ENCODE measurements at regions of chr5 and their contacts with region 1.

Region 1: DNA sequence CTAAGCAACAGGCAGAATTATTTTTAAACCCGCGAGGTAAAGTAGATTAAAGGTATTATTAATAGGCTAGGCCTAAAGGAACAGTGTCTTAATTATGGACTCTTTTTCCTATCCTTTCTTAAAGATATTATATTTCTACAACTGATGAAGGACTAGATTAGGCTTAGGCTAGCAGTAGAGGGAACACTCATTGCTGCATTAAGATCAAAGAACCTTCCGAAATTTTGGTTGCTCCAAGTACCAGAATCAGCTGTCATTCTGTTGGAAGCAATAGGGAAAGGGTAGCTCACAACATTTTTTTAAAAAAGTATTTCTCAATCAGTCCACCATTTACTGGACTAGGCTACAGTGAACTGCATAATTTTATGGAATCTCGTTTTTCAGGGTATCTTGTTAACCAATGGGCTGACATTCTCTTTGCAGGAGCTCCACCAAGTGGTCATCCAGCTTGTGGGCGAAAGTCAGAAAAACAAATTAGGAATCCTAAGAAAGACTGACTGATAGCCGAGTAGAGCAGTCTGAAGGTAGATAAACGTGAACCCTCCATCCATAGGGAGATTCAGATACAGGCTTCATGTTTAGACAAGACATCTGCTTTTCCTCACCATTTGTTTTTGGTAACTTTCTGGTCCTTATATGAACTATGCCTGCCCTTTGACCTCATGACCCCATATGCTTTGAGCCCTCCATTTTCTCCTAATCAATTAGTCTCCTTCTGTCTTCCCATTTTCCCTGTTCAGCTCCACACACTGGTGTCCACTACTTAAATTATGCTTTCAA is 103.6 kb upstream of the CHD1 start:
- DNase-seq: peak; percentile 82

Region 2: GRCh38 chr5:98727686-98728085 is 304.7 kb before region 1 on chr5:
- in situ Hi-C with region 1: no loop called
- DNase-seq: no peak

Region 3: GRCh38 chr5:98928873-98929696 is 103.3 kb before region 1 on chr5 and contains the start of gene CHD1:
- in situ Hi-C with region 1: loop called (anchors 10 kb)
- DNase-seq: peak; percentile 97